ENCODE measurements at regions of chr3 and their contacts with region 1.

Region 1: DNA sequence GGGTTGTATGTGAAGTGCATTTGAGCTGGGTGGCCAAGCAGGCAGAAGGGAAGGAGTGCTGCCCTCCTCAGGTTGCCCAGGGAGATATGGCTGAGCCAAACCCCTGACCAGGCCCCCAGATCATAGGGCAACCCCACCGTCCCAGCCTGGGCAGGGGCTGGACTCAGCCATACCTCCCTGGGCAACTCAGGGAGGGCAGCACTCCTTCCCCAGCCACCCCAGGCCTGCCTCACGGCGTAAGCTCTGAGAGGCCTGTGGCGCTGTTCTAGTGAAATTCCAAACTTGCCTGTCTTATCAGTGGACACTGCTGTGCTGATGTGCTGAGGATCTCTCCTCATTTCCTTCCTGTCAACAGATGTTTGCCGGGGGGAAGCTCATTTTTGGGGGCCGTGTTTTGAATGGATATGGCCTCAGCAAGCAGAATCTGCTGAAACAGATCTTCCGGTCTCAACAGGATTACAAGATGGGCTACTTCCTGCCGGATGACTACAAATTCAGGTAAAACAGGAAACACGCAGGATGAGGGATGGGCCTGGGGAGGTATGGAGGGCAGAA is 57.6 kb upstream of the FGD5 start:
- DNase-seq: no peak
- ATAC-seq: peak; percentile 17
- H3K4me3 ChIP-seq: no peak overlapping the region
- H3K4me3 Mint-ChIP-seq: peak overlapping the region in 6 of 10 donors; percentile 5 to 67 (median 30)
- H3K27ac ChIP-seq: no peak overlapping the region
- H3K27ac Mint-ChIP-seq: peak overlapping the region in 1 of 9 donors; percentile 0
- H3K4me1 ChIP-seq: no peaks in the 10 kb centered on the region
- H3K4me1 Mint-ChIP-seq: peaks cover 0 to 4% (median 4%) of the 10 kb centered on the region in 7 donors
- H3K27me3 ChIP-seq: no peaks in the 10 kb centered on the region
- H3K27me3 Mint-ChIP-seq: peaks cover 0 to 7% (median 0%) of the 10 kb centered on the region in 5 donors

Region 2: DNA sequence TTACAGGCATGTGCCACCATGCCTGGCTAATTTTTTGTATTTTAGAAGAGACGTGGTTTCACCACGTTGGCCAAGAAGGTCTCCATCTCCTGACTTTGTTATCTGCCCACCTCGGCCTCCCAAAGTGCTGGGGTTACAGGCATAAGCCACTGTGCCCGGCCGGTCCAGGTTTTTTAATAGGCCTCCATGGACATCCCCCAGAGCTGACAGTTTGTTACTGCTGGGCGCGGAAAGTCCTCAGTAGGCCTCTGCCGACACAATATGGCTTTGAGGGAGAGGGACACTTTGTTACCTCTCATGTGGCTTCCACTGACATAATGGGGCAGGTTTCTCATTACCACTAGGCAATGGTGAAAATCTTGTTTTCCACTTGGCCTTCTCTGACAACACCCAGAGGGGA is 1033.3 kb before region 1 on chr3:
- CTCF ChIA-PET with region 1: no interaction called
- POLR2A ChIA-PET with region 1: no interaction called
- intact Hi-C with region 1: loop called in 1 of 2 experiments (anchors 10 kb)
- DNase-seq: no peak
- ATAC-seq: no peak
- H3K4me3 ChIP-seq: no peak overlapping the region
- H3K4me3 Mint-ChIP-seq: no peak overlapping the region
- H3K27ac ChIP-seq: no peak overlapping the region
- H3K27ac Mint-ChIP-seq: no peak overlapping the region
- H3K4me1 ChIP-seq: no peaks in the 10 kb centered on the region
- H3K4me1 Mint-ChIP-seq: no peaks in the 10 kb centered on the region
- H3K27me3 ChIP-seq: no peaks in the 10 kb centered on the region
- H3K27me3 Mint-ChIP-seq: peaks cover 27 to 49% (median 39%) of the 10 kb centered on the region in 5 donors

Region 3: DNA sequence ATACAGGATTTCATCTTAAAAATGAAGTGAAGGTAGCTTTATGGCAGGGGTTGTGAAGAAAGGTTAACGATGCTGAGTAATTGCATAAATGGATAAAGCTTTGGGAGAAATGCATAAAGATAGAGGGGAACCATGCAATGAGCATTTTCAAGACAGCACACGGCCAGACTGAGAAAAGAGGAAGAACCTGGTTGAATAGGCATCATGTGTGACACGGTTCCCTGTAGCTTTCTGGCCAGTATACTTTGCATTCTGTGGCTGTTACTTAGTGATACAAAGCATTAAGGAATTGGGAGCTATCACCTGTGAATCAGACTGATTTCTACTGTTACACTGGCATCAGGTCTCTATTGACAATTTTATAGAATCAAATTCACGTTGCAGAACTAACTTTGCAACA is 219.5 kb after region 1 on chr3:
- CTCF ChIA-PET with region 1: no interaction called
- POLR2A ChIA-PET with region 1: no interaction called
- intact Hi-C with region 1: no loop called
- DNase-seq: no peak
- ATAC-seq: peak; percentile 53
- H3K4me3 ChIP-seq: no peak overlapping the region
- H3K4me3 Mint-ChIP-seq: no peak overlapping the region
- H3K27ac ChIP-seq: no peak overlapping the region
- H3K27ac Mint-ChIP-seq: peak overlapping the region in 3 of 9 donors; percentile 3 to 29 (median 17)
- H3K4me1 ChIP-seq: peaks cover 0 to 6% of the 10 kb centered on the region in 2 donors
- H3K4me1 Mint-ChIP-seq: peaks cover 17 to 55% (median 52%) of the 10 kb centered on the region in 7 donors
- H3K27me3 ChIP-seq: no peaks in the 10 kb centered on the region
- H3K27me3 Mint-ChIP-seq: no peaks in the 10 kb centered on the region